CD8-positive, alpha-beta T cell (primary cell): ENCODE measurements at regions of chr6 and their contacts with region 1.

Region 1: GRCh38 chr6:4018172-4018905 is 60.6 kb downstream of the FAM217A start:
- DNase-seq: peak; percentile 92 to 99 (median 96)
- ATAC-seq: peak; percentile 70
- H3K4me3 ChIP-seq: peak overlapping the region; percentile 44 to 74
- H3K4me3 Mint-ChIP-seq: peak overlapping the region; percentile 93
- H3K27ac ChIP-seq: peak overlapping the region; percentile 90 to 91
- H3K27ac Mint-ChIP-seq: peak overlapping the region; percentile 99
- H3K4me1 ChIP-seq: peaks cover 57% of the 10 kb centered on the region
- H3K4me1 Mint-ChIP-seq: peaks cover 74% of the 10 kb centered on the region
- H3K27me3 ChIP-seq: no peaks in the 10 kb centered on the region
- H3K27me3 Mint-ChIP-seq: no peaks in the 10 kb centered on the region
- CTCF ChIP-seq: no peak

Region 2: GRCh38 chr6:2245094-2245876 is 1773.1 kb before region 1 on chr6 and contains the start of gene GMDS:
- CTCF ChIA-PET with region 1: no interaction called
- POLR2A ChIA-PET with region 1: no interaction called
- intact Hi-C with region 1: loop called (anchors 10 kb)
- DNase-seq: peak; percentile 70 to 94 (median 80)
- ATAC-seq: peak; percentile 93
- H3K4me3 ChIP-seq: peak within 1 kb of the TSS; percentile 86 to 90
- H3K4me3 Mint-ChIP-seq: peak within 1 kb of the TSS; percentile 91
- H3K27ac ChIP-seq: peak within 1 kb of the TSS; percentile 81 to 86
- H3K27ac Mint-ChIP-seq: peak within 1 kb of the TSS; percentile 94
- H3K4me1 ChIP-seq: peaks cover 24% of the 10 kb centered on the region
- H3K4me1 Mint-ChIP-seq: peaks cover 61% of the 10 kb centered on the region
- H3K27me3 ChIP-seq: no peaks in the 10 kb centered on the region
- H3K27me3 Mint-ChIP-seq: no peaks in the 10 kb centered on the region
- CTCF ChIP-seq: no peak
- total RNA-seq, gene GMDS: 14.1 to 18.5 TPM

Region 3: DNA sequence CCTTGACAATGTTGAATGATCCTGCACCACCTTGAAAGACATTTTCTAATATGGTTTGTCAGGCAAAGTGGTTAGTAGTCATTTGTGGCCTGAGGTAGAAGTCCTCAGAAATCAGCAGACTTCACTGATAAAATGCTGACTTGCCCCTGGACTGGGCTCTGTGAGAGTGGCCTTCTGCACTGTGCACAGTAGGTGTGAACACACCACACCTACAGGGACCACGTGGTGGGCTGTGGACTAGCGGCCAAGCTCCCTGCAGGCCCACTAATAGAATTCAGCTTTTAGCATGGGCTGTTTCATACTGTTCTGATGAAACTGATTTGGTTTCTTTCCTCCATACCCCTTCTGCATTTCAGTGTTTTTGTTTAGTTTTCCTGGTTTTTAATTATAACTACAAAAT is 892.5 kb before region 1 on chr6:
- CTCF ChIA-PET with region 1: no interaction called
- POLR2A ChIA-PET with region 1: no interaction called
- intact Hi-C with region 1: loop called in 1 of 2 experiments (anchors 10 kb)
- DNase-seq: no peak
- ATAC-seq: no peak
- H3K4me3 ChIP-seq: no peak overlapping the region
- H3K4me3 Mint-ChIP-seq: no peak overlapping the region
- H3K27ac ChIP-seq: no peak overlapping the region
- H3K27ac Mint-ChIP-seq: no peak overlapping the region
- H3K4me1 ChIP-seq: no peaks in the 10 kb centered on the region
- H3K4me1 Mint-ChIP-seq: peaks cover 4% of the 10 kb centered on the region
- H3K27me3 ChIP-seq: no peaks in the 10 kb centered on the region
- H3K27me3 Mint-ChIP-seq: no peaks in the 10 kb centered on the region
- CTCF ChIP-seq: no peak

Region 4: DNA sequence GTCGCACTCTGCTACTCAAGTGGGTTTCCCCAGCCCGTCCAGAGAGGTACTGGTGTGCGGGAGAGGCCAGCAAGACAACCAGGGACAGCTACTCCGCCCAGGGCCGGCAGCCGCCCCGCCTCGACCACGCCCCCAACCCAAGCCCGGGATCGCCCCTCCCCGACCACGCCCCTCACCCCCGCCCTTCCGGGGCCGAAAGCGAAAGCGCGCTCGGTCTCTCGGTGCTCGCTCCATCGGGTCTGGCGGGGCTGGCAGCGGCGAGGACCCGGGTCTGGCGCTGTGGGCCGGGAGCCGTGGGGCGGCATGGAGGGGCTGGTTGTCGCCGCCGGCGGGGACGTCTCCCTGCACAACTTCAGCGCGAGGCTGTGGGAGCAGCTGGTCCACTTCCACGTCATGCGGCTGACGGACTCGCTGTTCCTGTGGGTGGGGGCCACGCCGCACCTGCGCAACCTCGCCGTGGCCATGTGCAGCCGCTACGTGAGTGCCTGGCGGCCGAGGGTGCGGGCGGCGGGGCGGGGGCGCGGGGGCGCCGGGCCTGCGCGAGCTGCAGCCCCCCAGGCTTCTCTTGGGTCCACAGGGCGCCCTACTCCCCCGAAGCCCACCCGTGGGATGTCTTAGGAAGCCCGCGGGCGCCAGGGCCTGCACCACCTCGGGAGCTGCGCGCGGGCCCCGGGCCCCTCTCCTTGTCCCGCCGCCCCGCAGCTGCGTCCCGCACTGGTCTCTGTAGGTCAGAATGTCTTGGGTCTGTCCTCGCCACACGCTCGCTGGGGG is 759.4 kb before region 1 on chr6 and contains the start of gene PSMG4:
- CTCF ChIA-PET with region 1: no interaction called
- POLR2A ChIA-PET with region 1: interaction called, 4 read pairs
- intact Hi-C with region 1: loop called (anchors 5 kb)
- DNase-seq: peak; percentile 85 to 96 (median 93)
- ATAC-seq: peak; percentile 82
- H3K4me3 ChIP-seq: peak within 1 kb of the TSS; percentile 81 to 82
- H3K4me3 Mint-ChIP-seq: peak within 1 kb of the TSS; percentile 95
- H3K27ac ChIP-seq: peak within 1 kb of the TSS; percentile 54 to 76
- H3K27ac Mint-ChIP-seq: peak within 1 kb of the TSS; percentile 94
- H3K4me1 ChIP-seq: peaks cover 37% of the 10 kb centered on the region
- H3K4me1 Mint-ChIP-seq: peaks cover 42% of the 10 kb centered on the region
- H3K27me3 ChIP-seq: no peaks in the 10 kb centered on the region
- H3K27me3 Mint-ChIP-seq: no peaks in the 10 kb centered on the region
- CTCF ChIP-seq: no peak
- total RNA-seq, gene PSMG4: 11.8 to 12.0 TPM

Region 5: GRCh38 chr6:3848925-3849605 is 169.3 kb before region 1 on chr6 and contains the start of gene FAM50B:
- CTCF ChIA-PET with region 1: interaction called, 12 read pairs
- POLR2A ChIA-PET with region 1: interaction called, 6 read pairs
- intact Hi-C with region 1: loop called (anchors 1 to 5 kb)
- DNase-seq: peak; percentile 81 to 94 (median 90)
- ATAC-seq: peak; percentile 95
- H3K4me3 ChIP-seq: peak within 1 kb of the TSS; percentile 54 to 63
- H3K4me3 Mint-ChIP-seq: peak within 1 kb of the TSS; percentile 80
- H3K27ac ChIP-seq: peak within 1 kb of the TSS; percentile 47 to 56
- H3K27ac Mint-ChIP-seq: peak within 1 kb of the TSS; percentile 84
- H3K4me1 ChIP-seq: peaks cover 6% of the 10 kb centered on the region
- H3K4me1 Mint-ChIP-seq: peaks cover 18% of the 10 kb centered on the region
- H3K27me3 ChIP-seq: no peaks in the 10 kb centered on the region
- H3K27me3 Mint-ChIP-seq: no peaks in the 10 kb centered on the region
- CTCF ChIP-seq: peak; percentile 75
- total RNA-seq, gene FAM50B: 0.97 to 1.1 TPM

Region 6: DNA sequence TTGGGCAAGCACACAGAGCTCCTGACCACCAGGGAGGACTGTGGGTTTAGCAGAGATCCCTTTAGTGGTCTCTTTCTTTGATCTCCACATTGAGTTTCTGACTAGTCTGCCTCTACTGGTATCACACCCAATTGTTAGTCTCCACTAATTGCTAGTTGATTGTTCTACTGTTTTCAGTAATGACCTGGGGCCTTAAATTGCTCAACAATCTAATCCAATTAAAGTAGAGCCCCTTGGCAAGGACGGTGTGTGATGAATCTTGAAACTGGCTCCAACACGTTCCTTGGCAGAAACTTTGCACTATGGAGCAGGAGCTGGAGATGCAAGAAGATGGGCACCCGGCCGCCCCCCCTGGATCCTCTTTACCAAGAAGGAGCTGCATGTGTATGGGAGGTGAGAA is 156.9 kb before region 1 on chr6:
- CTCF ChIA-PET with region 1: no interaction called
- POLR2A ChIA-PET with region 1: no interaction called
- intact Hi-C with region 1: no loop called
- DNase-seq: no peak
- ATAC-seq: no peak
- H3K4me3 ChIP-seq: no peak overlapping the region
- H3K4me3 Mint-ChIP-seq: no peak overlapping the region
- H3K27ac ChIP-seq: no peak overlapping the region
- H3K27ac Mint-ChIP-seq: no peak overlapping the region
- H3K4me1 ChIP-seq: no peaks in the 10 kb centered on the region
- H3K4me1 Mint-ChIP-seq: no peaks in the 10 kb centered on the region
- H3K27me3 ChIP-seq: no peaks in the 10 kb centered on the region
- H3K27me3 Mint-ChIP-seq: peaks cover 14% of the 10 kb centered on the region
- CTCF ChIP-seq: no peak

Region 7: GRCh38 chr6:4055420-4056041 is 37.2 kb after region 1 on chr6:
- CTCF ChIA-PET with region 1: interaction called, 9 read pairs
- POLR2A ChIA-PET with region 1: interaction called, 3 read pairs
- intact Hi-C with region 1: loop called (anchors 1 to 5 kb)
- DNase-seq: peak in 3 of 9 experiments; percentile 24 to 28 (median 26)
- ATAC-seq: no peak
- H3K4me3 ChIP-seq: no peak overlapping the region
- H3K4me3 Mint-ChIP-seq: no peak overlapping the region
- H3K27ac ChIP-seq: no peak overlapping the region
- H3K27ac Mint-ChIP-seq: peak overlapping the region; percentile 2
- H3K4me1 ChIP-seq: peaks cover 13% of the 10 kb centered on the region
- H3K4me1 Mint-ChIP-seq: peaks cover 19% of the 10 kb centered on the region
- H3K27me3 ChIP-seq: no peaks in the 10 kb centered on the region
- H3K27me3 Mint-ChIP-seq: no peaks in the 10 kb centered on the region
- CTCF ChIP-seq: no peak

Region 8: GRCh38 chr6:5260661-5261544 is 1242.6 kb after region 1 on chr6 and contains the starts of genes FARS2 and LYRM4:
- CTCF ChIA-PET with region 1: no interaction called
- POLR2A ChIA-PET with region 1: interaction called, 4 read pairs
- intact Hi-C with region 1: loop called (anchors 2 to 10 kb)
- DNase-seq: peak; percentile 86 to 98 (median 92)
- ATAC-seq: peak; percentile 82
- H3K4me3 ChIP-seq: peak within 1 kb of the TSS; percentile 93
- H3K4me3 Mint-ChIP-seq: peak within 1 kb of the TSS; percentile 98
- H3K27ac ChIP-seq: peak within 1 kb of the TSS; percentile 97 to 99
- H3K27ac Mint-ChIP-seq: peak within 1 kb of the TSS; percentile 100
- H3K4me1 ChIP-seq: peaks cover 17% of the 10 kb centered on the region
- H3K4me1 Mint-ChIP-seq: peaks cover 37% of the 10 kb centered on the region
- H3K27me3 ChIP-seq: no peaks in the 10 kb centered on the region
- H3K27me3 Mint-ChIP-seq: no peaks in the 10 kb centered on the region
- CTCF ChIP-seq: no peak
- total RNA-seq, gene FARS2: 9.1 to 10.5 TPM
- total RNA-seq, gene LYRM4: 23.4 to 24.3 TPM